IMR-90 (cell line): ENCODE measurements at regions of chr5 and their contacts with region 1.

Region 1: GRCh38 chr5:126808521-126808988 is 31.6 kb downstream of the LMNB1 start:
- DNase-seq: peak; percentile 50
- ATAC-seq: peak; percentile 46
- H3K4me3 ChIP-seq: no peak overlapping the region
- H3K27ac ChIP-seq: no peak overlapping the region
- H3K4me1 ChIP-seq: peaks cover 8% of the 10 kb centered on the region
- H3K27me3 ChIP-seq: no peaks in the 10 kb centered on the region
- CTCF ChIP-seq: peak; percentile 61
- POLR2A ChIP-seq: no peak
- RAD21 ChIP-seq: peak; percentile 53

Region 2: DNA sequence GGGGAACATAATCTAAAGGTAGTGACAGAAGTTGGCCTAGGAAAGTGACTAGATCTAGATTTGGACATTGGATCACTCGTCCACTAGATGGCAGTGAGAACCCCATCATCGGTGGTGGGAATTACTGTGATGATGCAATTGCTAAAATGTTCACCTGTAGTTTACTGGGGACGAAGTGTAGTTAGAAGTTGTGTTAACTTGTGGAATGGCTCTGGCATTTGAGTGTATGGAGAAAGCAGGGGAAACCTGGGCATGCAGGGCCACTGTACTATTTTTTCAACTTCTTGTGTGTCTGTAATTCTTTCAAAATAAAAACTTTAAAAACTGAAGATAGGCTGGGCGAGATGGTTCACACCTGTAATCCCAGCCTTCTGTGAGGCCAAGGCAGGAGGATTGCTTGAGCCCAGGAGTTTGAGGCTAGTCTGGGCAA is 132.3 kb before region 1 on chr5:
- CTCF ChIA-PET with region 1: no interaction called
- POLR2A ChIA-PET with region 1: no interaction called
- dilution Hi-C with region 1: no loop called
- in situ Hi-C with region 1: loop called (anchors 5 kb)
- intact Hi-C with region 1: loop called (anchors 2 kb)
- DNase-seq: peak; percentile 60
- ATAC-seq: peak; percentile 78
- H3K4me3 ChIP-seq: no peak overlapping the region
- H3K27ac ChIP-seq: no peak overlapping the region
- H3K4me1 ChIP-seq: no peaks in the 10 kb centered on the region
- H3K27me3 ChIP-seq: no peaks in the 10 kb centered on the region; the same call in 1 of the 2 replicates
- CTCF ChIP-seq: peak; percentile 86
- POLR2A ChIP-seq: no peak
- RAD21 ChIP-seq: peak; percentile 82

Region 3: GRCh38 chr5:126852091-126852571 is 43.6 kb after region 1 on chr5:
- CTCF ChIA-PET with region 1: no interaction called
- POLR2A ChIA-PET with region 1: interaction called, 15 read pairs
- dilution Hi-C with region 1: no loop called
- in situ Hi-C with region 1: no loop called
- intact Hi-C with region 1: no loop called
- DNase-seq: peak; percentile 17
- ATAC-seq: no peak
- H3K4me3 ChIP-seq: no peak overlapping the region
- H3K27ac ChIP-seq: no peak overlapping the region
- H3K4me1 ChIP-seq: peaks cover 2% of the 10 kb centered on the region; the same call in 1 of the 2 replicates
- H3K27me3 ChIP-seq: no peaks in the 10 kb centered on the region
- CTCF ChIP-seq: no peak
- POLR2A ChIP-seq: no peak
- RAD21 ChIP-seq: no peak

Region 4: GRCh38 chr5:127517480-127518318 is 709.1 kb after region 1 on chr5 and contains the start of gene PRRC1:
- CTCF ChIA-PET with region 1: no interaction called
- POLR2A ChIA-PET with region 1: no interaction called
- dilution Hi-C with region 1: no loop called
- in situ Hi-C with region 1: loop called (anchors 25 kb)
- intact Hi-C with region 1: no loop called
- DNase-seq: peak; percentile 81
- ATAC-seq: peak; percentile 97
- H3K4me3 ChIP-seq: peak within 1 kb of the TSS; percentile 99
- H3K27ac ChIP-seq: peak within 1 kb of the TSS; percentile 96
- H3K4me1 ChIP-seq: peaks cover 3% of the 10 kb centered on the region; the same call in 1 of the 2 replicates
- H3K27me3 ChIP-seq: peaks cover 5% of the 10 kb centered on the region
- CTCF ChIP-seq: no peak
- POLR2A ChIP-seq: peak; percentile 73; the same call in 1 of the 2 replicates
- RAD21 ChIP-seq: no peak
- total RNA-seq, gene PRRC1: 46.8 and 49.4 TPM in 2 replicates